Tibial artery (tissue), 4 donors: ENCODE measurements at regions of chr17 and their contacts with region 1.

Region 1: GRCh38 chr17:60435244-60436167 is 13.2 kb downstream of the CHCT1 start:
- DNase-seq: peak; percentile 80 to 83
- H3K4me3 ChIP-seq: no peak overlapping the region
- H3K27ac ChIP-seq: peak overlapping the region in 1 of 2 donors; percentile 10
- H3K4me1 ChIP-seq: peaks cover 0 to 6% (median 2%) of the 10 kb centered on the region in 4 donors
- H3K27me3 ChIP-seq: no peaks in the 10 kb centered on the region
- CTCF ChIP-seq: peak; percentile 90 to 95

Region 2: DNA sequence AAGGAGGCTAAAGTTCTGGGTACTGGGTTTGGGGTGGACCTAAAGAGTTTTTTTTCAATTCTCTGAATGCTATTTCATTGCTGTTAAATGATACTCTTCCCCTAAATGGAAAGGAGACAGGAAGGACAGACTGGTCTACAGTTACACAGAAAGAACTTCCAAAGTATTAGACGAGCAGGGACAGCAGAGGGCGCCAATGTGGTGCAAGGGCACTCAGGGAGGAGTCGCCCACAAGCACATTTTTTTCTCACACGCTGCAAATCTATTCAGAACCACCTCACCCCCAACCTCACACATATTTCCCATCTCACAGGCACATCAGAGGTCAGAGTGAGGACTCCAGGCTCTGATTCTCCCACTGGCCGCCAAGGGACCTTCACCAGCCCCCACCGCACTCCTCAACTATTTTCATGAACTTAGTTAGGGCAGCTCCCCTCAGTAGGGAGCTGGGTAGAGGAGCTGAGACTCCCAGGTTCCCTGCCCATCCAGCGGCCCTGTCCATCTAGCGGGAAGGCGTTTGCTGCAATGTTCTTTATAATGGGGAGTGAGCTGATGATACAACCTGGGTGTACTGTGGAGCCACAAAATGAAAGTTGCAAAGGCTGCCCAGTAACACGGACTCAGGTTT is 292.5 kb before region 1 on chr17:
- intact Hi-C with region 1: loop called (anchors 10 kb)
- DNase-seq: peak; percentile 84 to 87
- H3K4me3 ChIP-seq: peak overlapping the region in 1 of 2 donors; percentile 10
- H3K27ac ChIP-seq: no peak overlapping the region
- H3K4me1 ChIP-seq: peaks cover 0 to 35% (median 27%) of the 10 kb centered on the region in 4 donors
- H3K27me3 ChIP-seq: peaks cover 0 to 72% of the 10 kb centered on the region in 2 donors
- CTCF ChIP-seq: peak; percentile 50 to 59